ENCODE measurements at regions of chr1 and their contacts with region 1.

Region 1: DNA sequence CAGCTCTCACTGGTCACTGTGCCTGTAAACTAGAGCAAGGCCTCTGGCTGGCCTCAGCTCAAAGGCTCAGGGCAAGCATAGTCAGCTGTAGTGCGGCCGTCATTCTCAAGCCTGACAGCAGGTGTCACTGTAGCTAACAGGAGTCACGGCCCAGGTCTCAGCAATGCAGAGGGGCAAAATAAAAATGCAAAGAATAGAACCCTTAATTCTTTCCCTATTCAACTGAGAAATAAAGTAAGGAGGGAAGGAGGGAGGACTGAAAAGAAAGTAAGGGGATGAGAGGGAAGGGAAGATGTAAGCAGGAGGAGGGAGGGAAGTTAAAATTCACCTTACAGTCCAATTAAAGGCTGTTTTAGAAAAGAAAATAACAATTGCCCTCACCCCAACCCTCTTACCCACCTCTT is 106.1 kb downstream of the KIAA0319L start:
- DNase-seq: peak; percentile 60 to 88
- ATAC-seq: peak; percentile 86 to 98 (median 97)
- H3K4me3 ChIP-seq: no peak overlapping the region
- H3K4me3 Mint-ChIP-seq: no peak overlapping the region
- H3K27ac ChIP-seq: no peak overlapping the region
- H3K27ac Mint-ChIP-seq: peak overlapping the region in 1 of 2 donors; percentile 12
- H3K4me1 ChIP-seq: no peaks in the 10 kb centered on the region
- H3K4me1 Mint-ChIP-seq: peaks cover 5 to 6% of the 10 kb centered on the region in 2 donors
- H3K27me3 ChIP-seq: no peaks in the 10 kb centered on the region
- H3K27me3 Mint-ChIP-seq: no peaks in the 10 kb centered on the region
- CTCF ChIP-seq: peak; percentile 79

Region 2: GRCh38 chr1:35544978-35545377 is 93.9 kb after region 1 on chr1:
- intact Hi-C with region 1: loop called (anchors 1 kb)
- DNase-seq: peak in 1 of 2 donors; percentile 85
- ATAC-seq: peak; percentile 59 to 63 (median 62)
- H3K4me3 ChIP-seq: no peak overlapping the region
- H3K4me3 Mint-ChIP-seq: no peak overlapping the region
- H3K27ac ChIP-seq: no peak overlapping the region
- H3K27ac Mint-ChIP-seq: peak overlapping the region in 1 of 2 donors; percentile 39
- H3K4me1 ChIP-seq: peaks cover 15% of the 10 kb centered on the region
- H3K4me1 Mint-ChIP-seq: peaks cover 54 to 55% of the 10 kb centered on the region in 2 donors
- H3K27me3 ChIP-seq: no peaks in the 10 kb centered on the region
- H3K27me3 Mint-ChIP-seq: no peaks in the 10 kb centered on the region
- CTCF ChIP-seq: no peak

Region 3: GRCh38 chr1:35726450-35727433 is 275.6 kb after region 1 on chr1:
- intact Hi-C with region 1: loop called (anchors 1 kb)
- DNase-seq: peak; percentile 44 to 83
- ATAC-seq: peak; percentile 79 to 97 (median 93)
- H3K4me3 ChIP-seq: no peak overlapping the region
- H3K4me3 Mint-ChIP-seq: no peak overlapping the region
- H3K27ac ChIP-seq: no peak overlapping the region
- H3K27ac Mint-ChIP-seq: peak overlapping the region in 1 of 2 donors; percentile 47
- H3K4me1 ChIP-seq: peaks cover 5% of the 10 kb centered on the region
- H3K4me1 Mint-ChIP-seq: peaks cover 6 to 7% of the 10 kb centered on the region in 2 donors
- H3K27me3 ChIP-seq: no peaks in the 10 kb centered on the region
- H3K27me3 Mint-ChIP-seq: no peaks in the 10 kb centered on the region
- CTCF ChIP-seq: peak; percentile 94